ENCODE measurements at regions of chr2 and their contacts with region 1.

Region 1: GRCh38 chr2:84925724-84926376 is 20.4 kb downstream of the TMSB10 start:
- DNase-seq: peak; percentile 93 to 94
- H3K4me3 ChIP-seq: peak overlapping the region; percentile 53
- H3K4me3 Mint-ChIP-seq: peak overlapping the region; percentile 70
- H3K27ac Mint-ChIP-seq: no peak overlapping the region
- H3K4me1 ChIP-seq: peaks cover 8% of the 10 kb centered on the region; the same call in 1 of the 2 replicates
- H3K4me1 Mint-ChIP-seq: peaks cover 11% of the 10 kb centered on the region
- H3K27me3 ChIP-seq: no peaks in the 10 kb centered on the region
- H3K27me3 Mint-ChIP-seq: no peaks in the 10 kb centered on the region
- CTCF ChIP-seq: peak; percentile 80 to 97

Region 2: GRCh38 chr2:84741296-84741765 is 184.5 kb before region 1 on chr2:
- CTCF ChIA-PET with region 1: no interaction called
- POLR2A ChIA-PET with region 1: no interaction called
- intact Hi-C with region 1: loop called (anchors 1 kb)
- DNase-seq: peak; percentile 36 to 43
- H3K4me3 ChIP-seq: no peak overlapping the region
- H3K4me3 Mint-ChIP-seq: no peak overlapping the region
- H3K27ac Mint-ChIP-seq: no peak overlapping the region
- H3K4me1 ChIP-seq: no peaks in the 10 kb centered on the region
- H3K4me1 Mint-ChIP-seq: no peaks in the 10 kb centered on the region
- H3K27me3 ChIP-seq: no peaks in the 10 kb centered on the region; the same call in 1 of the 2 replicates
- H3K27me3 Mint-ChIP-seq: peaks cover 21% of the 10 kb centered on the region
- CTCF ChIP-seq: peak; percentile 23 to 54

Region 3: GRCh38 chr2:84865181-84865783 is 60.6 kb before region 1 on chr2:
- CTCF ChIA-PET with region 1: no interaction called
- POLR2A ChIA-PET with region 1: no interaction called
- intact Hi-C with region 1: no loop called
- DNase-seq: no peak
- H3K4me3 ChIP-seq: no peak overlapping the region
- H3K4me3 Mint-ChIP-seq: no peak overlapping the region
- H3K27ac Mint-ChIP-seq: no peak overlapping the region
- H3K4me1 ChIP-seq: no peaks in the 10 kb centered on the region
- H3K4me1 Mint-ChIP-seq: no peaks in the 10 kb centered on the region
- H3K27me3 ChIP-seq: no peaks in the 10 kb centered on the region; the same call in 1 of the 2 replicates
- H3K27me3 Mint-ChIP-seq: no peaks in the 10 kb centered on the region
- CTCF ChIP-seq: peak in 1 of 2 experiments; percentile 15

Region 4: GRCh38 chr2:84905181-84906107 is 20.4 kb before region 1 on chr2 and contains the start of gene TMSB10:
- CTCF ChIA-PET with region 1: no interaction called
- POLR2A ChIA-PET with region 1: no interaction called
- intact Hi-C with region 1: loop called (anchors 1 kb)
- DNase-seq: peak; percentile 88 to 92
- H3K4me3 ChIP-seq: peak within 1 kb of the TSS; percentile 93
- H3K4me3 Mint-ChIP-seq: peak within 1 kb of the TSS; percentile 88
- H3K27ac Mint-ChIP-seq: peak within 1 kb of the TSS; percentile 93
- H3K4me1 ChIP-seq: peaks cover 14% of the 10 kb centered on the region
- H3K4me1 Mint-ChIP-seq: peaks cover 21% of the 10 kb centered on the region
- H3K27me3 ChIP-seq: no peaks in the 10 kb centered on the region
- H3K27me3 Mint-ChIP-seq: no peaks in the 10 kb centered on the region
- CTCF ChIP-seq: peak in 1 of 2 experiments; percentile 0
- total RNA-seq, gene TMSB10: 1,258 and 1,458 TPM in 2 replicates

Region 5: DNA sequence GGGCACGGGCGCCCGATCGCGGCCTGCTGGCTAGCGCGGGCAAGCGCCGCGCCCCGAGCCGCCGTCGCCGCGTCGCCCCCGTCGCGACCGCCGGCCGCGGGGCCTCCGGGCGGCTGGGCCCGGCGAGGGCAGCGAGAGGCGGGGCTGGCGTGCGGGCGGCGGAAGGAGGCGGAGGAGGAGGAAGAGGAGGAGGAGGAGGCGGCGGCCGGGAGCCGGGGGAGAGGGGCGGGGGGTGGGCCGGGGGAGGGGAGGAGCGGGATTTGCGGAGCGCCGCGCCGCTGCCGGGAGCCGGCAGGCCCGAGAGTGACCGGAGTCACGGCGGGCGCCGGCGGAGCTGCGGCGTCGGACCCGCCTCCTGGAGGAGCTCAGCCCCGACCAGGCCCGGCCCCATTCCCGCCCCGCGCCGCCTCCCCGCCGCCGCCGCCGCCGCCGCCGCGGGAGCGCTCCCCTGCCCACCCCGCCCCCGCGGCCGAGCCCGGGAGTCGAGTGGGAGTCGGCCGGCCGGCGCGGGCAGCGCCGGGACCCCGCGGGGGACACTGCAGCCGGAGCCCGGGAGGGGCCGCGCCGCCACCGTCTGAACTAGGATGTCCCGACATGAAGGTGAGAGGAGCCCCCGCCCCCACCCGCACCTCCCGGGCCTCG is 45.1 kb after region 1 on chr2 and contains the start of gene KCMF1:
- CTCF ChIA-PET with region 1: interaction called, 5 read pairs
- POLR2A ChIA-PET with region 1: no interaction called
- intact Hi-C with region 1: loop called (anchors 2 kb)
- DNase-seq: peak; percentile 85 to 86
- H3K4me3 ChIP-seq: peak within 1 kb of the TSS; percentile 95
- H3K4me3 Mint-ChIP-seq: peak within 1 kb of the TSS; percentile 95
- H3K27ac Mint-ChIP-seq: peak within 1 kb of the TSS; percentile 98
- H3K4me1 ChIP-seq: peaks cover 27% of the 10 kb centered on the region
- H3K4me1 Mint-ChIP-seq: peaks cover 7% of the 10 kb centered on the region
- H3K27me3 ChIP-seq: no peaks in the 10 kb centered on the region
- H3K27me3 Mint-ChIP-seq: no peaks in the 10 kb centered on the region
- CTCF ChIP-seq: no peak
- total RNA-seq, gene KCMF1: 81.5 and 83.4 TPM in 2 replicates

Region 6: DNA sequence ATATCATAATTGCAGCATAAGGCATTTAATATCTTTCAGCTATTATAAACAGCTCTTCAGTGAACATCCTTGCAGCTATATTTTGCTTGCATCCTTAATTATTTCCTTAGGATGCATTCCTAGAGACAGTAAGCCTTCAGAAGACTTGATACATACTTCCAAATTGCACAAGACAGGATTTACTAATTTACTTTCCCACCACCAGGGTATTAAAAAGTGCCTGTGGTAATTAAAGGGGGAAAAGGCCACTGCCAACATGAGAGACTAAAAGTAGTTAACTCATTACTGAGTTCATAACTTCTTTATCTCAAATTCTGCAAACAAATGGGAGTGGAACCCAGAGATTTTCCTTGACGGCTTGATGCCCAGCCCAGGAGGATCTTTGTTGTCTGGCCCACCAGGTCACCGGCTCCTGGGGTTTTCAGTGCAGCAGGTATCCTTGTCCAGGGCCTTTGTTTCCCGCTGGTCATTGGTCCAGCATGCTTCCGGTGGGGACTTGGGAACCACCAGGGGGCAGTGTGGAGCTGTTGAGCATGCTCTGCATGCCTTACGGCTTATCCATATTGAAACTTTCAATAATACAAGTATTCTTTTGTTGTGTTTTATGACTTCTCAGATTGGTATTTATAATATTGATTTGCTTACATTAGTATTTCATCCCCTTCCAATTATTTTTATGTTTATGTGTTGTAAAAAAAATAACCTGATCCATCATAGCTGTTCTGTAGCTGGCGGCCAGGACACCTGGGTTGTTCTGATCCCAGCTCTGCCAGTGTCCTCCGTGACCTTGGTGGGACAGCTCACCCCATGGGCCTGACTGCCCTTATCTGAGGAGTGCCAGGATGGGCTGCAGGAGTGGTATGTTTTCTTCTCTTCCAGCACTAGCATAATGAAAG is 340.5 kb after region 1 on chr2:
- CTCF ChIA-PET with region 1: interaction called, 11 read pairs
- POLR2A ChIA-PET with region 1: no interaction called
- intact Hi-C with region 1: no loop called
- DNase-seq: peak; percentile 79 to 85
- H3K4me3 ChIP-seq: no peak overlapping the region
- H3K4me3 Mint-ChIP-seq: no peak overlapping the region
- H3K27ac Mint-ChIP-seq: no peak overlapping the region
- H3K4me1 ChIP-seq: peaks cover 57% of the 10 kb centered on the region
- H3K4me1 Mint-ChIP-seq: peaks cover 55% of the 10 kb centered on the region
- H3K27me3 ChIP-seq: no peaks in the 10 kb centered on the region
- H3K27me3 Mint-ChIP-seq: no peaks in the 10 kb centered on the region
- CTCF ChIP-seq: peak; percentile 87 to 96